Activated CD4-positive, alpha-beta T cell treated with anti-CD3 and anti-CD28 coated beads, Interleukin-2, amount 10 ng/mL, durations not matched to agents 24 days and 14 days (primary cell): ENCODE measurements at regions of chr5 and their contacts with region 1.

Region 1: DNA sequence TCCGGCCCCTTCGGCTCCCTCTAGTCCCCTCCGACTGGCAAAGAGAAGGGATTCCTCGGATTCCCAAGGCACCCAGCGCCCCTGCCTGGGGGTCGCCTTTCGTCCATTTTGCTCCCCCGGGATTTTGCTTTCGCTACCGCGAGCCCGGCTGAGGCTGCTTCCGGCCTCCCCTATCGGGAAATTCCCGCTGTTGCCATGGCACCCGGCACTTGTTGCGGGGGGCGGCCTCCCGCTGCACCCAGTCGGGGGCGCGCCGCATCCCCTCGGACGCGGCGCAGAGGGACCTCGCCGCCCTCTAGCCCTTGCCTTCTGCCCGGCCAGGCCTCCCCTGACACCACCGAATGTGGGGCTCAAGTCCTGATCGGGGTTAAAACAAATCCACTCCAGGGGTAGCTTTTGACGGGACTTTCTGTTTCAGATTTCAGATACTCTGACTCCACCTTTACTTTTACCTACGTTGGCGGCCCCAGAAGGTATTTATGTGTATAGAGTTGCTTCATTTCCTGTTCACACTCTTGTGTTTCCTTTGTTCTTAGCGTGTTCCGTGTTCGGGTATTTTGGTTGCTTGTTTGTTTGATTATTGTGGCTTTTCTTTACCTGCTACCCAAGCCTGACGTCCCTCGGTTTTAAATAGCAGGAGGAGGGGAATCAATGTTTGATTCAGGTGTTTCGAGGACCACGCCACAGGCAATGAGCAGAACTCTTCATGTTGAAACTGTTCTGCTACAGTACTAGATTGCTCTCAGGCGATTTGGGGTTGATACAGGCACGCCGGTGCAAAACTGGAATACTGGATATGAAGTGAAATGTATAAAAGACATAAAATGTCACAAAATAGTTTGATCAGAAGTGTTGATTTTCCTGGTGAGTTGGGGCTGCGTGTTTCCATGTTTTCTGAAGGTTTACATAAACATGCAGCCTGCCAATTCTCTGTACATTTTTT is 1.5 kb downstream of the PARP8 start:
- DNase-seq: peak; percentile 95
- H3K4me3 Mint-ChIP-seq: peak overlapping the region; percentile 99
- H3K27ac Mint-ChIP-seq: peak overlapping the region; percentile 100
- H3K4me1 Mint-ChIP-seq: peaks cover 48% of the 10 kb centered on the region
- H3K27me3 Mint-ChIP-seq: no peaks in the 10 kb centered on the region

Region 2: GRCh38 chr5:50593681-50594080 is 74.2 kb before region 1 on chr5:
- intact Hi-C with region 1: loop called (anchors 5 kb)
- DNase-seq: peak; percentile 76
- H3K4me3 Mint-ChIP-seq: peak overlapping the region; percentile 41
- H3K27ac Mint-ChIP-seq: peak overlapping the region; percentile 49
- H3K4me1 Mint-ChIP-seq: peaks cover 41% of the 10 kb centered on the region
- H3K27me3 Mint-ChIP-seq: no peaks in the 10 kb centered on the region

Region 3: GRCh38 chr5:50684721-50685120 is 16.8 kb after region 1 on chr5:
- intact Hi-C with region 1: loop called (anchors 2 kb)
- DNase-seq: no peak
- H3K4me3 Mint-ChIP-seq: no peak overlapping the region
- H3K27ac Mint-ChIP-seq: no peak overlapping the region
- H3K4me1 Mint-ChIP-seq: peaks cover 21% of the 10 kb centered on the region
- H3K27me3 Mint-ChIP-seq: no peaks in the 10 kb centered on the region

Region 4: DNA sequence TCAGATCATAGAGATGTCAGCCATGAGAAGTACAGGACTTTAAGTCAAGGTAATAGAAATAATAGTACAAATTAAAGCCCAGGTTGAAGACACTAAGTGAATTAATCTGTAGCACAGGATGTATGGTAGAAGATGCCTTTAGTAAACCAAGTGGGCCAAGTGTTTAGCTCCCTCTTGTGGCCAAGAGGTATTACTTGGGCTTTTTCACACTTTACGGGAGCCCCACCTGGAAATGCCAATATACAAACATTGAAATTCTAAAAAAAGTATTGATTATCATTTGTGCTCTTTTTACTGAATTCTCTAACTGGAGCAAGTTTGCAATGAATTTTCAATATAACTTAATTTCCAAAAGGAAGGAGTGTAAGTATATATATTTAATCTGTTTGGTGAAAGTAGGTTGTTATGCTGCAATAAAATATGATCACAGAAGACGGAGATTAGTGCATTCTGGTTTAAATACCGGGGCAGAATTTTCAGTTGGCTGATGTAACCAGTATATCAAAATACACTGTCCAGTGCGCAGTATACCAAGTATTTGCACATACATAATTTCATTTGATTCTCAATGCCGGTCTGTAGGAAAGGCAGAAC is 83.2 kb after region 1 on chr5:
- intact Hi-C with region 1: loop called (anchors 1 kb)
- DNase-seq: peak; percentile 81
- H3K4me3 Mint-ChIP-seq: no peak overlapping the region
- H3K27ac Mint-ChIP-seq: no peak overlapping the region
- H3K4me1 Mint-ChIP-seq: peaks cover 26% of the 10 kb centered on the region
- H3K27me3 Mint-ChIP-seq: no peaks in the 10 kb centered on the region